Sigmoid colon (tissue), 7 donors: ENCODE measurements at regions of chr20 and their contacts with region 1.

Region 1: GRCh38 chr20:13336308-13337089 is 115.4 kb downstream of the ISM1 start:
- DNase-seq: no peak
- H3K4me3 ChIP-seq: no peak overlapping the region
- H3K27ac ChIP-seq: peak overlapping the region in 2 of 4 donors; percentile 8 to 71
- H3K4me1 ChIP-seq: peaks cover 0 to 53% (median 41%) of the 10 kb centered on the region in 4 donors
- H3K27me3 ChIP-seq: no peaks in the 10 kb centered on the region
- CTCF ChIP-seq: no peak
- EP300 ChIP-seq: no peak
- POLR2A ChIP-seq: no peak

Region 2: GRCh38 chr20:13412806-13413445 is 76.4 kb after region 1 on chr20:
- intact Hi-C with region 1: loop called (anchors 5 kb)
- DNase-seq: no peak
- H3K4me3 ChIP-seq: no peak overlapping the region
- H3K27ac ChIP-seq: peak overlapping the region in 2 of 4 donors; percentile 57 to 65
- H3K4me1 ChIP-seq: peaks cover 0 to 53% (median 38%) of the 10 kb centered on the region in 4 donors
- H3K27me3 ChIP-seq: no peaks in the 10 kb centered on the region
- CTCF ChIP-seq: no peak
- EP300 ChIP-seq: no peak
- POLR2A ChIP-seq: no peak

Region 3: DNA sequence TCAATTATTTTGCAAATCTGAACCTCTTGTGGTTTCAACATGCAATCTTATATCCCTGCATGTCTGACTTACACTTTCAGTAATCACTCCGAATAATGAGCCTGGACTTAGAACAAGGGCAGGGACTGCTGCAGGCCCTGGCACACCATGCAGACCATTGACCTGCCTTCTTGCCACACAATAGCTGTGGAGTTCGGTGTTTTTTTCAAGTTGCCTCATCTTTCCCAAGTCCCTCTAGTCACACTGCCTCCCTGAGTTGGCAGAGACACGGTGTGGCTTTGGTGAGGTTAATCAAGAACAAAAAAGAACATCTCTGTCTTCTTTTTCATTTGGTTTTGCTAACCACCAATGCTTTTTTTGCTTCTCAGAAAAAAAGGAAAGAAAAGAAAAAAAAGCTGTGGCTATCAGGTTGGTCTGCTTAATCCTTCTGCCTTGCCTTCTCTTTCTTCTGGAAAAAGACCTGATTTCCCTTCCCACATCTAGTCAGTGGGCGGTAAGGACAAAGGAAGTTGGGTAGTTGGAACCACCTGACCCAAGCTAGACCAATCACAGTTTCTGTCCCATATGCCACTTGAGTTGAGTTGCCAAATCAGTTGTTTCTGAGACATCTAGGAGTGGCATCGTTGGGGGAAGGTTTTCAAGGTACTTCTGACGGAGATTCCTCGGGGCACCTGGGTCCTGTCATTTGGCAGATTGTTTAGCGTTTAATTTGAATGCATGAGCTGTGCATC is 358.1 kb after region 1 on chr20:
- intact Hi-C with region 1: no loop called
- DNase-seq: no peak
- H3K4me3 ChIP-seq: no peak overlapping the region
- H3K27ac ChIP-seq: no peak overlapping the region
- H3K4me1 ChIP-seq: no peaks in the 10 kb centered on the region
- H3K27me3 ChIP-seq: no peaks in the 10 kb centered on the region
- CTCF ChIP-seq: no peak
- EP300 ChIP-seq: no peak
- POLR2A ChIP-seq: no peak